ENCODE measurements at regions of chr14 and their contacts with region 1.

Region 1: DNA sequence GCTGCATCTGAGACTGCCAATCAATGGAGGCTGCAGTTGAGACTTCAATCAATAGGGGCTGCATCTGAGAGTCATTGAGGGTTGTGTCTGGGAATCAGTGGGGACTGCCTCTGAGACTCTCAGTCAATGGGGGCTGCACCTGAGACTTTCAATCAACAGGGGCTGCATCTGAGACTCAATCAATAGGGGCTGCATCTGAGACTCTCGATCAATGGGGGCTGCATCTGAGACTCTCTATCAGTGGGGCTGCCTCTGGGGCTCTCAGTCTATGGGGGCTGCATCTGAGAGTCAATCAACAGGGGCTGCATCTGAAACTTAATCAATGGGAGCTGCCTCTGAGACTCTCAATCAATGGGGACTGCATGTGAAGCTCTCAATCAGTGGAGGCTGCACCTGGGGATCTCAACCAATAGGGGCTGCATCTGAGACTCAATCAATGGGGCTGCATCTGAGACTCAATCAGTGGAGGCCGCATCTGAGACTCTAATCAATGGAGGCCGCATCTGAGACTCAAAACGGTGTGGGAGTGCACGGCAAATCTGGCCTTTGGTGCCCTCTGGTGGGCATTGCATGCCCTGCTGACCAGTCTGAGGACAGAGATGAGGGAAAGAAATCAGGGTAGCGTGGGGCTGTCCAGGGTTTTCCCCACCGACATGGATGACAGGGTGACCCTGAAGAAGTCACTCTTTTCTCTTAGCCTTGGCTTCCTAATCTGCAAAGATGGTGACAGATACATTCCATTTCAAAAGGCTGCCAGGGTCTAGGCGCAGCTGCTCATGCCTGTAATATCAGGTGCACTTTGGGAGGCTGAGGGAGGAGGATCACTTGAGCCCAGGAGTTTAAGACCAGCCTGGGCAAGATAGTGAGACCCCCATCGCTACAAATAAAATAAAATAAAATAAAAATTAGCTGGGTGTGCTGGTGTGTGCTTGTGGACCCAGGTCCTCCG is 41.3 kb upstream of the EIF5 start:
- DNase-seq: peak; percentile 64 to 86 (median 84)
- H3K4me3 ChIP-seq: no peak overlapping the region
- H3K27ac ChIP-seq: no peak overlapping the region
- H3K4me1 ChIP-seq: no peaks in the 10 kb centered on the region
- H3K27me3 ChIP-seq: no peaks in the 10 kb centered on the region
- CTCF ChIP-seq: peak; percentile 77 to 89 (median 88)
- EP300 ChIP-seq: no peak
- POLR2A ChIP-seq: no peak

Region 2: DNA sequence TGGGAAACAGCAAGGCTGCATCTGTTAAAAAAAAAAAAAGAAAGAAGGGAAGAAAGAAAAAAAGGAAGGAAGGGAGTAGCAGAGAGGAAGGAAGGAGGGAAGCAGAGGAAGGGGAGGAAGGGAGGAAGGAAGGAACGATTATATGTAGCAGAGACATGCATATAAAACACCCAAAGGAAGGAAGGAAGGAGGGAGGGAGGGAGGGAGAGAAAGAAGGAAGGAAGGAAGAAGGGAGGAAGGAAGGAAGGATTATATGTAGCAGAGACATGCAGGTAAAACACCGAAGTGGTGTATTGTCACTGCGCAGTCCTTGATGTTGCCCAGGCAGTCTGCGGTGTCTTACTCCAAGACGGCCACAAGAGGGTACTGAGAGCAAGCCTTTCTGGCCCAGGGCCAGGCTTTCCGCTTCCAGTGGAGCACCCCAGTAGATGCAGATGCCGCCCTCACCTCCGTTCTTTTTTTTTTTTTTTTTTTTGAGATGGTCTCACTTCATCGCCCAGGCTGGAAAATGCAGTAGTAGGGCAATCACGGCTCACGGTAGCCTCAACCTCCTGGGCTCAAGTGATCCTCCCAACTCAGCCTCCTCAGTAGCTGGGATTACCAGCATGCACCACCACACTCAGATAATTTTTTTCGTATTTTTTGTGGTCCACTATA is 214.5 kb before region 1 on chr14:
- intact Hi-C with region 1: loop called in 2 of 4 experiments (anchors 10 kb)
- DNase-seq: peak; percentile 73 to 85 (median 81)
- H3K4me3 ChIP-seq: no peak overlapping the region
- H3K27ac ChIP-seq: no peak overlapping the region
- H3K4me1 ChIP-seq: peaks cover 3% of the 10 kb centered on the region
- H3K27me3 ChIP-seq: no peaks in the 10 kb centered on the region
- CTCF ChIP-seq: peak; percentile 48 to 62 (median 59)
- EP300 ChIP-seq: no peak
- POLR2A ChIP-seq: no peak

Region 3: GRCh38 chr14:103104654-103105452 is 187.8 kb before region 1 on chr14:
- intact Hi-C with region 1: loop called (anchors 2 to 5 kb)
- DNase-seq: peak; percentile 67 to 84 (median 82)
- H3K4me3 ChIP-seq: no peak overlapping the region
- H3K27ac ChIP-seq: no peak overlapping the region
- H3K4me1 ChIP-seq: peaks cover 9% of the 10 kb centered on the region
- H3K27me3 ChIP-seq: no peaks in the 10 kb centered on the region
- CTCF ChIP-seq: peak; percentile 92 to 98 (median 97)
- EP300 ChIP-seq: no peak
- POLR2A ChIP-seq: no peak

Region 4: GRCh38 chr14:103185051-103185992 is 107.4 kb before region 1 on chr14:
- intact Hi-C with region 1: loop called in 2 of 4 experiments (anchors 5 kb)
- DNase-seq: no peak
- H3K4me3 ChIP-seq: no peak overlapping the region
- H3K27ac ChIP-seq: no peak overlapping the region
- H3K4me1 ChIP-seq: peaks cover 2% of the 10 kb centered on the region
- H3K27me3 ChIP-seq: no peaks in the 10 kb centered on the region
- CTCF ChIP-seq: peak; percentile 19 to 69 (median 64)
- EP300 ChIP-seq: no peak
- POLR2A ChIP-seq: no peak